Activated naive CD4-positive, alpha-beta T cell treated with anti-CD3 and anti-CD28 coated beads for 36 hours (primary cell): ENCODE measurements at regions of chr1 and their contacts with region 1.

Region 1: DNA sequence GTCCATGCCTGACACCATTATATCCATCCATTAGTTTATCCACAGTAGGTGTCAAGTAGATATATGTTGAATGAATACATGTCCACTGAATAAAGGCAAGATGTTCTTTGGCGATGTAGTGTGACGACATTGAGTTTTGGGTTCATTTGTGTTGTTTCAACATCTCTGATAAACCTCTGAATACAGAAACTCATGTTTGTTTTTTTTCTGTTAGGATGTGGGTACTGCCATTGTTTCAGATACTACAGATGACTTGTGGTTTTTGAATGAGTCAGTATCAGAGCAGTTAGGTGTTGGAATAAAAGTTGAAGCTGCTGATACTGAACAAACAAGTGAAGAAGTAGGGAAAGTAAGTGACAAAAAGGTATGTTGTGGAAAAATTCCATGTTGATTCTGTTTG is 28.1 kb downstream of the MDM4 start:
- DNase-seq: no peak
- H3K4me3 Mint-ChIP-seq: no peak overlapping the region
- H3K27ac Mint-ChIP-seq: peak overlapping the region; percentile 54
- H3K4me1 Mint-ChIP-seq: peaks cover 45% of the 10 kb centered on the region
- H3K27me3 Mint-ChIP-seq: no peaks in the 10 kb centered on the region

Region 2: DNA sequence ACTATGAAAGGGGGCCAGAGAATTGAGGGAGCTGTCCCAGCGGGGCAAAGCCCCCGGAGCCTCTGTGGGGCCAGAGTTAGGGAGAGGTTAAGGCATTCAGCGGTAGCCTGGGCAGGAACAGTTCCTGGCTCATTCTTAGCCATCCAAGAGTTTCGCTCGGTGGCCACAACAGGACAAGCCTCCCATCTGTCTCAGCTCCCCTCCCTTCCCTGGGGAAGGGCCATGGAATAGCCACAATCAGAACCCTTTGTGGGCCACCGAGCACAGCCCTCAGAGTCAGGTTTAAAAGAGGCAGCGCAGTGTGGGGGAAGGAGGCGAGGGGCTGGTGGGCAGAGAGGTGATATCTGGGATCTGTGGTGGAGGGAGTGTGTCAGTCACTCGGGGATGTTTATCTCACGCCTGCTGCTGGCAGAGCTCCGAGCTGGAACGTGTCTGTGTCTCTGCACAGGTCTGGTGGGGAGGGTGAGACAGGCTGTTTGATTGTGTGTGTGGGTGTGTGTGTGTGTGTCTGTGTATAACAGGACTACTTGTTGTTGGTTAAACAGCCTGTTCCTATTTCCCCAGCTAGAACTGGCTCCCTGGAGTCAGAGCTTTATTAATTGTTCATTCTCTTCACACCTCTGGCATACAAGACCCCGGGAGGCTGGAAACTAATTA is 280.9 kb before region 1 on chr1:
- CTCF ChIA-PET with region 1: no interaction called
- intact Hi-C with region 1: no loop called
- DNase-seq: no peak
- H3K4me3 Mint-ChIP-seq: no peak overlapping the region
- H3K27ac Mint-ChIP-seq: no peak overlapping the region
- H3K4me1 Mint-ChIP-seq: no peaks in the 10 kb centered on the region
- H3K27me3 Mint-ChIP-seq: no peaks in the 10 kb centered on the region

Region 3: GRCh38 chr1:204453141-204453772 is 91.1 kb before region 1 on chr1:
- CTCF ChIA-PET with region 1: no interaction called
- intact Hi-C with region 1: loop called (anchors 1 kb)
- DNase-seq: peak; percentile 92
- H3K4me3 Mint-ChIP-seq: peak overlapping the region; percentile 60
- H3K27ac Mint-ChIP-seq: peak overlapping the region; percentile 94
- H3K4me1 Mint-ChIP-seq: peaks cover 37% of the 10 kb centered on the region
- H3K27me3 Mint-ChIP-seq: no peaks in the 10 kb centered on the region

Region 4: DNA sequence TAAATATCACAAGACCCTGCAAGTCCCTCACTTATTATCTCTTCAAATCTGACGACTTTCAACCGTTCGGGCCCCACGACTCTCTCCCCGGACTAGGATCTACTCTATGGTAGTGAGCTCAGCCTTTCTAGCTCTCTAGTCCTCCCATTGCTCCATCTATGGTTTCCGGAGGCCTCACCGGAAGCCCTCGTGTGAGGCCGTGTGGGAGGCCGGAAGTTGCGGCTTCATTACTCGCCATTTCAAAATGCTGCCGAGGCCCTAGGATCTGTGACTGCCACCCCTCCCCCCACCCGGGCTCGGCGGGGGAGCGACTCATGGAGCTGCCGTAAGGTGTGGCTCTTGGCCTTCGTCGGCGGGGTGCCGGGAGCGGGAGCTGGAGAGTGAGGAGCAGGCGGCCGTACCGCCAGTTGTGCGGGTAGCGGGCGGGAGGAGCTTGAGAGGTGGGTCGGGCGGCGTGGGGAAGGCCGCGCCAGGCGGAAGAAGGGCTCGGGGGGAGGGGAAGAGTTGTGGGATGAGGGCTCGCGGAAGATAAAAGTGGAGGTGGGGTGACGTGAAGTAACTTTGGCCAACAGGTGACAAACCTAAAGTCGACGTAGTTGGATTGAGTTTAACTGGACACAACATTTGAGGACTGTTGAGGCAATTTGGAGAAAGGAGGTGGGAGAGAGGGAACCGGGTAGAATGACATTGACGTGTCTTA is 28.0 kb before region 1 on chr1 and contains the start of gene MDM4:
- CTCF ChIA-PET with region 1: interaction called, 7 read pairs
- intact Hi-C with region 1: loop called (anchors 1 kb)
- DNase-seq: peak; percentile 97
- H3K4me3 Mint-ChIP-seq: no peak within 1 kb of the TSS
- H3K27ac Mint-ChIP-seq: peak within 1 kb of the TSS; percentile 72
- H3K4me1 Mint-ChIP-seq: peaks cover 59% of the 10 kb centered on the region
- H3K27me3 Mint-ChIP-seq: no peaks in the 10 kb centered on the region
- total RNA-seq, gene MDM4: 109 TPM

Region 5: DNA sequence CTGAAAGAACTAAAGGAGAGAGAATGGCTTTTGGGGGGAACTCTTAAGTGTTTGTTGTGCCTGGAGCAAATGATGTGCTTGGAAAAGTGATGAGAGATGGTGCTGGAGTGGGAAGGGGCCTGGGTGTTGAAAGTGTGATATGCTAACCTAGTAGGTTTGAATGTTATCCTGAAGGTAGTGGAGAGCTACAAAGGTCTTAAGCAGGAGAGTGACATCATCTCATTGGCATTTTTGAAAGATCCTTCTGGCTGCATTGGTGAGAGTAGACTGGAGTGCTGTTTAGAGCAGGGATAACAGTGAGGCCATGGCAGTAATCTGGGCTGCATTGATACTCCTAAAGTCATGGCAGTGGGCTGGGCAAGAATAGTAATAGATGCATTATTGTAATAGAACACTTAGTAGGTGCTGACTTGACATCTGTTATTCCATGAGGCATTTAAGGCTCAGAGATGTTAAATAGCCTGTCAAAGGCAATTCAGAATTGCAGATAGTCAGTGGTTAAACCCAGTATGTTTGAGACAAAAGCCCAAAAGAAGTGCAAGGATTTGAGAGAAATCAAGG is 16.3 kb after region 1 on chr1:
- CTCF ChIA-PET with region 1: interaction called, 7 read pairs
- intact Hi-C with region 1: loop called (anchors 1 kb)
- DNase-seq: no peak
- H3K4me3 Mint-ChIP-seq: no peak overlapping the region
- H3K27ac Mint-ChIP-seq: no peak overlapping the region
- H3K4me1 Mint-ChIP-seq: peaks cover 61% of the 10 kb centered on the region
- H3K27me3 Mint-ChIP-seq: no peaks in the 10 kb centered on the region

Region 6: GRCh38 chr1:204565617-204566582 is 21.6 kb after region 1 on chr1:
- CTCF ChIA-PET with region 1: interaction called, 7 read pairs
- intact Hi-C with region 1: loop called (anchors 1 kb)
- DNase-seq: peak; percentile 76
- H3K4me3 Mint-ChIP-seq: no peak overlapping the region
- H3K27ac Mint-ChIP-seq: no peak overlapping the region
- H3K4me1 Mint-ChIP-seq: peaks cover 45% of the 10 kb centered on the region
- H3K27me3 Mint-ChIP-seq: no peaks in the 10 kb centered on the region

Region 7: GRCh38 chr1:205284343-205285144 is 740.2 kb after region 1 on chr1:
- CTCF ChIA-PET with region 1: no interaction called
- intact Hi-C with region 1: no loop called
- DNase-seq: peak; percentile 97
- H3K4me3 Mint-ChIP-seq: peak overlapping the region; percentile 29
- H3K27ac Mint-ChIP-seq: peak overlapping the region; percentile 87
- H3K4me1 Mint-ChIP-seq: peaks cover 77% of the 10 kb centered on the region
- H3K27me3 Mint-ChIP-seq: no peaks in the 10 kb centered on the region